Mammary epithelial cell (primary cell): ENCODE measurements at regions of chr1 and their contacts with region 1.

Region 1: GRCh38 chr1:165630629-165631341 is at the start of gene MGST3:
- DNase-seq: peak; percentile 94
- H3K4me3 ChIP-seq: peak within 1 kb of the TSS; percentile 56 to 83 (median 80)
- H3K27ac ChIP-seq: peak within 1 kb of the TSS; percentile 75
- H3K4me1 ChIP-seq: peaks cover 18% of the 10 kb centered on the region
- H3K27me3 ChIP-seq: no peaks in the 10 kb centered on the region
- CTCF ChIP-seq: no peak
- total RNA-seq, gene MGST3: 96.0 to 130 TPM

Region 2: GRCh38 chr1:165537356-165538109 is 93.3 kb before region 1 on chr1:
- CTCF ChIA-PET with region 1: no interaction called
- dilution Hi-C with region 1: no loop called
- in situ Hi-C with region 1: no loop called
- intact Hi-C with region 1: no loop called
- DNase-seq: no peak
- H3K4me3 ChIP-seq: no peak overlapping the region
- H3K27ac ChIP-seq: no peak overlapping the region
- H3K4me1 ChIP-seq: no peaks in the 10 kb centered on the region
- H3K27me3 ChIP-seq: peaks cover 5% of the 10 kb centered on the region
- CTCF ChIP-seq: no peak

Region 3: DNA sequence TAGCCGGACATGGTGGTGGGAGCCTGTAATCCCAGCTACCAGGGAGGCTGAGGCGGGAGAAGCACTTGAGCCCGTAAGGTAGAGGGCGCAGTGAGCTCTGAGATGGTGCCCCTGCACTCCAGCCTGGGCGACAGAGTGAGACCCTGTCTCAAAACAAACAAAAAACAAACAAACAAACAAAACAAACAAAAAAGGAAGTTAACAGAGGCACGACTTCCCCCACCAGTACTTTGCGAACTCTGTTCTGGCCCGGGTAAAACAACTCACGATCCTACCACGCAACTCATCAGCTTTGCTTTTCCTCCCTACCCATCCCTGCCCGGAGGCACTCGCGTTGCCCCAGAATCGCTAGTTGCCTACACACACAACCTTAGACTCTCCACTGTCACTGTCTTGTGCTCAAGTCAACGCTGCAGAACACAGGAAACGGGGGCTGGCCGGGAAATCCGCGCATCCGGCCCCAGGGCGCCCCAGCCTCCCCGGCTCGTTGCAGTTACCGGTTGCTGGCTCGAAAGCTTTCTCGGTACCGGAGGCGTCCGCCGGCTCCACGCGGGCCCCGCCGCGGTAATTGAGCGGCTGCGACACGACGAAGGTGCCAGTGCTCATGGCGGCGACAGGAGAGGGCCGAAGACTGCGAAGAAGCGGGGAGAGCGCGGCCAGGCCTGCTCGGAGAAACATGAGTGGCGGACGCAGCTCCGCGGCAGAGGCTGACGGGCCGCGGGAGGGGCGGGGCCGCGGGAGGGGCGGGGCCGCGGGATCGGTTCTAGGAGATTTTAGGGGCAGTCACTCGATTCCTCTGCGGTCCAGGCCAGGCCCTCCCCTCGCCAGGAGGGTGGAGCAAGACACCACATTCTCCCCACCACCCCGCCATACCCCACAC is 67.3 kb after region 1 on chr1 and contains the start of gene ALDH9A1:
- CTCF ChIA-PET with region 1: interaction called, 3 read pairs
- dilution Hi-C with region 1: loop called (anchors 10 kb)
- in situ Hi-C with region 1: no loop called
- intact Hi-C with region 1: loop called (anchors 1 kb)
- DNase-seq: peak; percentile 80
- H3K4me3 ChIP-seq: peak within 1 kb of the TSS; percentile 57 to 87 (median 79)
- H3K27ac ChIP-seq: peak within 1 kb of the TSS; percentile 79
- H3K4me1 ChIP-seq: peaks cover 13% of the 10 kb centered on the region
- H3K27me3 ChIP-seq: no peaks in the 10 kb centered on the region
- CTCF ChIP-seq: peak; percentile 1 to 34
- total RNA-seq, gene ALDH9A1: 51.2 to 55.2 TPM

Region 4: DNA sequence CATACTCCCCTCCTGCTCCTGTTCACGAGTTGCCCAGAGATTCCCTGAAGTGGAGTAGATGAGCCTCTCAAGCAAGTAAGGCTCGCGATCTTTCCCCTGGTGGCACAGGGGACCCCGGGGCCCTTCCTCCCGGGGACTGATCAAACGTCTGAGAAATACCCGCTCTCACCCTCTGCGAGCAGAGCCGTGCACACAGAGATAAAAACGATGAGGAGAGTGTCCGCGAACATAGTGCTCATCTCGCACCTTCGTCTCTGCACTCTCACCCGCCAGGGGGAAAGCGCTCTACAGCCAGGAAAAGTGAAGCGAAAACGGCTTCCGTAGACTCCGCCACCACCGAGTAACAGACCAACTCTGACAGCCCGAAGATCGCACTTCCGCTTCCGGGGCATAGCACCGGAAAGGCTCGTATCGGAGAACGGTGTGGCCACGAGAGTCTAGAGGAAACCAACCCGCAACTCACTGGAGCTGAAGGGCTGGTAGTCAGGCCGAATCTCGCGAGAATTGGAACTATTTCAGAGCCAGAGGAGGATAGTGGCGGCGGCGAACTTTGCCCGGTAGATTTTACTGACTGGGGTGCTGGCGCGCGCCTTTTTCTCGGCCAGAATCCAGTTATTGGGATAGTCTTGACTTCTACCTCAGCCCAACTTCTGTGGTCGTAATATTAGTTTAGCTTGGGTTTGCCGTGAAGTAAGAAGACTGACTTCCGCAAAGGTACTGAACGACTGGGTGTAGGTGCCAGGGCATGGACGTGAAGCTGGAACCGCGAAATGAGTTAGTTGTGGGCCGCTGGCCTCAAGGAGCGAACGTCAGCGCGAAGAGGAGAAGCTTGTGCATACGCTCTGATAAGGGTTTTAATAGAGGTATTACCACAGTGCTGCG is 138.0 kb after region 1 on chr1 and contains the start of gene TMCO1:
- CTCF ChIA-PET with region 1: no interaction called
- dilution Hi-C with region 1: no loop called
- in situ Hi-C with region 1: no loop called
- intact Hi-C with region 1: loop called (anchors 2 kb)
- DNase-seq: peak; percentile 97
- H3K4me3 ChIP-seq: peak within 1 kb of the TSS; percentile 66 to 87 (median 82)
- H3K27ac ChIP-seq: peak within 1 kb of the TSS; percentile 88
- H3K4me1 ChIP-seq: peaks cover 27% of the 10 kb centered on the region
- H3K27me3 ChIP-seq: no peaks in the 10 kb centered on the region
- CTCF ChIP-seq: peak in 1 of 2 donors; percentile 33
- total RNA-seq, gene TMCO1: 79.0 to 80.9 TPM